ENCODE measurements at regions of chr3 and their contacts with region 1.

Region 1: GRCh38 chr3:190968616-190969015 is 106.1 kb upstream of the GMNC start:
- DNase-seq: no peak

Region 2: GRCh38 chr3:191020730-191021396 is 52.2 kb after region 1 on chr3:
- intact Hi-C with region 1: loop called (anchors 2 kb)
- DNase-seq: no peak

Region 3: DNA sequence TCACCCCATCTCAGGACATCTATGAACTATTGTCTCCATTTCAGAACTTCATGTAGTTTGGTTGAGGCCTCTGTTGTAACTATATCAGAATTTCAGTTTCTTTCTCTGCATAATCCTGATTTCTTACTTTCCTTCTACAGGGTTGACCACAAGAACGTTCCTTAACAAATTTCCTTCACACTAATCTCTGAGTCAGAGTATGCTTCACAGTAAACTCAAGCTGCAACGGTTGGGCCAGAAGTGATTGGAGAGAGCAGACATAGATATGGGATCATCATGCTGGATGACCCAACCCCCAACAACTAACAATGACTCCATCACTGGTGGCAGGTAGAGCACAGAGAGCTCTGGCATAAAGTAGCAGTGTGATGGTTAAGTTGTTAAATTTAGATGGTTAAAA is 101.6 kb after region 1 on chr3:
- intact Hi-C with region 1: no loop called
- DNase-seq: no peak